ENCODE measurements at regions of chr14 and their contacts with region 1.

Region 1: GRCh38 chr14:95442633-95443021 is 73.8 kb downstream of the SYNE3 start:
- DNase-seq: peak; percentile 83
- H3K4me3 ChIP-seq: no peak overlapping the region
- H3K27ac ChIP-seq: no peak overlapping the region
- H3K4me1 ChIP-seq: no peaks in the 10 kb centered on the region
- H3K27me3 ChIP-seq: no peaks in the 10 kb centered on the region

Region 2: DNA sequence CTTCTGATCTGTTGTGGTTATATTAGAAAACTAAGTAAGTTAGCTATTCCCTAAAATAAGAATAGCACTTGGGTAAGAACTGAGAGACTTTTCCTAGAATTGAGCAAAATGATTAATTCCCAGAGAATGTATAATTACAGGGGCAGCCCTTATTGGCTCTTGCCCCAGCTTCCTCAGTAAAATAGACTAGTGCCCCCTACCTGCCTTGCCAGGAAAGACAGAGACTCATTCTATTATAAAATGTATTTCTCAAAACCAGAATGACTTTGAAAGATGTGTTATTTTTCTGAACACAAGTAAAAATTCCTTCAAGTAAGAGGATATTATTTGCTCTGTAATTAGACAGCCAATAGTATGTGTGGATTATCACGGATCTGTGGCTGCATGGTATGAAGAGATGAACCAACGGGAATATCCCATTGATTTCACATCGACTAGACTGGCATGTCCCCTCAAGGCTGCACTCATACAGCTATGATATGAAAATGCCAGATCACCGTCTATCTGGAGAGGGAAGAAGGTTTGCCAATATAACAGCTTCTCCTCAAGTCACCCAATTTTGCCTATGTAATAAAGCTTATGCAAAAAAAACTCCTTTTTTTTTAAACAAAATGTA is 84.9 kb after region 1 on chr14:
- in situ Hi-C with region 1: loop called (anchors 5 kb)
- DNase-seq: peak; percentile 95
- H3K4me3 ChIP-seq: peak overlapping the region; percentile 58
- H3K27ac ChIP-seq: peak overlapping the region; percentile 75
- H3K4me1 ChIP-seq: peaks cover 66% of the 10 kb centered on the region
- H3K27me3 ChIP-seq: no peaks in the 10 kb centered on the region

Measured in GM23248 (cell line).